PC-9 (cell line): ENCODE measurements at regions of chr1 and their contacts with region 1.

Region 1: DNA sequence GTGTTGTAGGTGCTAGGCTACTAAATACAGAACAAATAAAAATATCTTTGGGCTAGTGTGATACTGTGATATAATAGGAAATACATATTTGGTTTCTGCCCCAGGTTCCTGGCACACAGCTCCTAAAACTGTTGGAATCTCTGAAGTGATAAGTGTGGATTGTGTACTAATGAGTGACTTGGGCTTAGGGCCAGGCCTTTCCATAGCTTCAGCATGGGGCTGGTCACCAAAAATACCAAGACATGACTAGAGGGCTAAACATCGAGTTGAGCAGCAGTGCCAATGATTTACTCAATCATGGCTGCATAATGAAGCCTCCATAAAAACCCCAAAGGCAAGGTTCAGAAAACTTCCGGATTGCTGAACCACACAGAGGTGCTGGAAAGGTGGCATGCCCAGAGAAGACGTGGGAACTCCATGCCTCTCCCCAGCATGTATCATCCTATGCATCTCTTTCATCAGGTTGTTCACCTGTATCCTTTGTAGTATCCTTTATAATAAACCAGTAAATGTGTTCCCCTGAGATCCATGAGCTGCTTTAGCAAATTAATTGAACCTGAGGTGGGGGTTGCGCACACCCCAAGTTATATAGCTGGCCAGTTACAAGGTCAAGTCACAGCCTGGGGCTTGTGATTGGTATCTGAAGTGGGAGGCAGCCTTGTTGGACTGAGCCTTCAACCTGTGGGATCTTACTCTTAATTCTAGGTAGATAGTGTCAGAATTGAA is 51.6 kb downstream of the ZMYM4 start:
- DNase-seq: no peak
- H3K4me3 ChIP-seq: no peak overlapping the region
- H3K27ac ChIP-seq: no peak overlapping the region
- H3K4me1 ChIP-seq: no peaks in the 10 kb centered on the region
- H3K27me3 ChIP-seq: no peaks in the 10 kb centered on the region
- CTCF ChIP-seq: no peak

Region 2: GRCh38 chr1:35062518-35063196 is 257.5 kb before region 1 on chr1:
- CTCF ChIA-PET with region 1: no interaction called
- POLR2A ChIA-PET with region 1: no interaction called
- intact Hi-C with region 1: no loop called
- DNase-seq: peak; percentile 28 to 49
- H3K4me3 ChIP-seq: no peak overlapping the region
- H3K27ac ChIP-seq: no peak overlapping the region
- H3K4me1 ChIP-seq: no peaks in the 10 kb centered on the region
- H3K27me3 ChIP-seq: no peaks in the 10 kb centered on the region
- CTCF ChIP-seq: no peak

Region 3: GRCh38 chr1:35369922-35370671 is 49.9 kb after region 1 on chr1:
- CTCF ChIA-PET with region 1: interaction called, 13 read pairs
- POLR2A ChIA-PET with region 1: no interaction called
- intact Hi-C with region 1: no loop called
- DNase-seq: no peak
- H3K4me3 ChIP-seq: no peak overlapping the region
- H3K27ac ChIP-seq: no peak overlapping the region
- H3K4me1 ChIP-seq: no peaks in the 10 kb centered on the region
- H3K27me3 ChIP-seq: no peaks in the 10 kb centered on the region
- CTCF ChIP-seq: no peak